Gastrocnemius medialis (tissue), 4 donors: ENCODE measurements at regions of chr15 and their contacts with region 1.

Region 1: DNA sequence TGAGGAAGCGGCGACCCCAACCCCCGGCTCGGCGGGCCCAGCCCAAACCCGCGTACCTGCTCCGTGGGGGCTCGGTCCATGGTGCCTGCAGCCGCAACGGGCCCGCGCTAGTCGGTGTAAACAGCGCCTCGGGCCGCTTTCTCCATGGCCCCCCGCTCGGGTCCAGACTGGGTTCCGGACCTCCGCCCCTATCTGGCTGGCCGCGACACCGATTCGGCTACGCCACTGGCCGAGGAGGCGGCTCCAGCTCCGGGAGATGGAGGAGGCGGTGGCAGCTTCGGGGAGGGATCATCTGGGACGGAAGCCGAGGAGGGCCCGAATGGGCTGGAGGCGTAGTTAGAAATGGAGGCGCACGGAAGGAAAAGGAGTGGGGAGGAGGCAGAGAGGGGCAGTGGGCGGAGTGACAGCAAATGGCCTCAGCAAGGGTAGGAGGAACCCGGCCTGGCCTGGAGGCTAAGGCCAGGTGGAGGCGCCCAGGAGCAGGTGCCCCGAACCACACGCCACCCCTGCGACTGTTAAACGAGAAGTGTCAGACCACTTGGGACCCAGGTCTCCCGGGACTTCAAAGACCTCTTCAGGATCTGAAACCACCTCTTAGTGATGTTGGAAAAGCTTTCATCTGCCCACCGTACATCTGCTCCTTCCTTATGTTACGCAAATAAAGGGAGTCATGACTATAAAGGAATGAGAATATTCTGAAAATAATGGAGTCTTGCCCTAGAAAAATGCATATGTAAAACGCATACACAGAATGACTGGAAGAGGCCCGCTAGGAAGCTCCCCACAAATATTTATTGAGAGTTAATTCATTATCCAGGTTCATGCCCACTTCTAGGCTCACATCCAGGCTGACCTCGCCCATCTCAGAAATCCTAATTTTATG is at the start of gene SECISBP2L:
- DNase-seq: peak; percentile 85 to 88
- ATAC-seq: peak; percentile 97 to 99
- H3K4me3 ChIP-seq: peak within 1 kb of the TSS; percentile 89 to 99 (median 95)
- H3K27ac ChIP-seq: peak within 1 kb of the TSS; percentile 77 to 88 (median 84)
- H3K4me1 ChIP-seq: peaks cover 24 to 29% of the 10 kb centered on the region in 2 donors
- H3K27me3 ChIP-seq: no peaks in the 10 kb centered on the region
- CTCF ChIP-seq: peak in 2 of 5 experiments; percentile 9 to 14
- POLR2A ChIP-seq: peak; percentile 63 to 66
- total RNA-seq, gene SECISBP2L: 23.7 to 27.5 (median 24.5) TPM

Region 2: DNA sequence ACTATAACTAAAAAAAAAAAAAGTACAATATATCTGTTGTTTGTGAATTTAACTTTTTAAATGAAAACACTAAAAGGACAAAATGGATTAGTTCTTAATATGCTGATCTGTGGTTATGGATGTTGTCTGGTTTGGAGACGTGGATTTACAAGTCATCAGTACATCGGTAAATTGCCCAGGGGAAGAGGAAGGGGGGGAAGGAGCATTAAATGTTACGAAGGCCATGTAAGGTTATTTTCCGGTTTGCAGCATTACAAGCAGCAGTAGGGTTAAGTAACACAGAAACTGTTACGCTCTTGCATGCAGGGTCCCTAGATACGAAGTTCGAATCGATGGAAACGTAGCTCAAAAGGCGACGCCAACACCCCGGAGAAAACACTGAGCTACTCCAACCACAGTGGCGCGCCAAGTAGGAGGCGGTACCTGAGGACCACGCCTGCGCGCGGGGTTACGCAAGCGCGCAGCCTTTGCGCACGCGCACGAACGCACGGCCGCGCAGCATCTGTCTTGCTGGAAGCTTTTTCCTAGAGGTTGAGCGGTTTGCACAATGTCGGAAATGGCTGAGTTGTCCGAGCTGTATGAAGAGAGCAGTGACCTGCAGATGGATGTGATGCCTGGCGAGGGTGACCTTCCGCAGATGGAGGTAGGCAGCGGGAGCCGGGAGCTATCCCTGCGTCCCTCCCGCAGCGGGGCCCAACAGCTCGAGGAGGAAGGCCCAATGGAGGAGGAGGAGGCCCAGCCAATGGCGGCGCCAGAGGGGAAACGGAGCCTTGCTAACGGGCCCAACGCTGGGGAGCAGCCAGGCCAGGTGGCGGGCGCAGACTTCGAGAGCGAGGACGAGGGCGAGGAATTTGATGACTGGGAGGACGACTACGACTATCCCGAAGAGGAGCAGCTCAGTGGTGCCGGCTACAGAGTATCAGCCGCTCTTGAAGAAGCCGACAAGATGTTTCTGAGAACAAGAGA is 168.5 kb before region 1 on chr15 and contains the start of gene EID1:
- in situ Hi-C with region 1: no loop called
- intact Hi-C with region 1: loop called (anchors 5 kb)
- DNase-seq: peak; percentile 79 to 89
- ATAC-seq: peak; percentile 98 to 99
- H3K4me3 ChIP-seq: peak within 1 kb of the TSS; percentile 74 to 87 (median 81)
- H3K27ac ChIP-seq: peak within 1 kb of the TSS; percentile 79 to 87 (median 83)
- H3K4me1 ChIP-seq: peaks cover 18 to 19% of the 10 kb centered on the region in 2 donors
- H3K27me3 ChIP-seq: no peaks in the 10 kb centered on the region
- CTCF ChIP-seq: no peak
- POLR2A ChIP-seq: peak; percentile 49 to 50
- total RNA-seq, gene EID1: 110 to 146 (median 135) TPM

Region 3: DNA sequence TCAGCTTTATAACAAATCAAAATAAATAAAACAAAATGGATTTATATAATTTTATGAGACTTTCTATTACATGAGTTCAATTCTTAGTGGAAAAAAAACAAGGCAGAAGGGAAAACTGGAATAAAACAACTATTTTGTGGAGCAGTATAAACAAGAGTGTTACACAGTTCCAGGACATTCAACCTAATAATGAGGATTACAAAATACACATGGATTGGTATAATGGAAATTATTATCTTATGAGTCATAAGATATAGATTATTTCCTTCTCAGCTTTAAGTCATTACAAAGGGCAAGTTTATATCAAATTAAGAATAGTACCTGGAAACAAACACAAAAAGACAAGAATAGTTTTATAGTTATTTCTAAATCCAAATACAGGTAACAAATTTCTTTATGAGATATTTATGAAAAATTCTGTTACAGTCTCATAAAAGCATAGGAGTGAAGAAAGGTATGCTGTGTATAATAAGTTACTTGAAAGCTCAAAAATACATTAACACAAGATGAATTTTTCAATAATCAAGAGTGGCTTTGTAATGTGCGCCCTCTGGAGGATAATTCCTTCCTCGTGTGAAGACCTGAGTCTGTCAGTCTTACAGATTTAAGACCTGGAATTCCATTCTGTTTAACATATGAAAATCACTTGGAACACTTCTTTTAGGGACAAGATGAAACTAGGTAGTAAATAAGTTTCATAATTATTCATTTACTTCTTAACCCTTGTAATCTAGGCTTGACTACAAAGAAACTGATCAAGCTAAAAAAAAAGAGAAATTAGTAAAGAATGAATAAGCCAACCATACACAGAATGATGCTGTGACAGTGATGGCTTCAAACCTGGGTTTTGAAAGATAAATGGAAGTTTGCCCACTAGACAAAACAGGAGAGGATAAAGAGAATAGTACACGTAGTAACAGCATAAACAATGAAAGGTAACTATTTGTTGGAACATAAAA is 99.5 kb after region 1 on chr15:
- in situ Hi-C with region 1: no loop called
- intact Hi-C with region 1: loop called (anchors 2 kb)
- DNase-seq: no peak
- ATAC-seq: no peak
- H3K4me3 ChIP-seq: no peak overlapping the region
- H3K27ac ChIP-seq: no peak overlapping the region
- H3K4me1 ChIP-seq: peaks cover 35 to 37% of the 10 kb centered on the region in 2 donors
- H3K27me3 ChIP-seq: no peaks in the 10 kb centered on the region
- CTCF ChIP-seq: peak in 4 of 5 experiments; percentile 4 to 61 (median 26)
- POLR2A ChIP-seq: no peak

Region 4: DNA sequence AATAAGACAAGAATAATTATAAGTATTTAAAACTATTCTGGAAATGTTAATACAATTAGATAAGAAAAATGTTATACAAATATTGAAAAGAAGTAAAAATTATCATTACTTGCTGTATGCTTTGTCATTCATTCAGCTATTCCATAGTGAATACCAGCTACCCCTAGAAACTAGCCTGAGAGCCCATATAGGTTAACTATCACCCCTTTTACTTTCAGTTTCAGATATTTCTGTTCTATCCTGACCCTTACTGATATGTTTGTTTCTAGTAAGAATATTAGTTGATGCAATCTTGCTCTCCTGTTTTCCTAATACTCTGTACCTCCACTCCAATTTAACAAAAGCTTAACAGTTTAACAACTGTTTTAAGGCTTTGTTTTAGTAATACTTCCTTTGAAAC is 542.6 kb after region 1 on chr15:
- in situ Hi-C with region 1: no loop called
- intact Hi-C with region 1: no loop called
- DNase-seq: no peak
- ATAC-seq: no peak
- H3K4me3 ChIP-seq: no peak overlapping the region
- H3K27ac ChIP-seq: no peak overlapping the region
- H3K4me1 ChIP-seq: no peaks in the 10 kb centered on the region
- H3K27me3 ChIP-seq: no peaks in the 10 kb centered on the region
- CTCF ChIP-seq: no peak
- POLR2A ChIP-seq: no peak